ENCODE measurements at regions of chr3 and their contacts with region 1.

Region 1: GRCh38 chr3:130759699-130760338 is 13.2 kb upstream of the PIK3R4 start:
- DNase-seq: peak in 1 of 2 donors; percentile 60
- H3K4me3 ChIP-seq: no peak overlapping the region
- H3K27ac ChIP-seq: no peak overlapping the region
- H3K4me1 ChIP-seq: no peaks in the 10 kb centered on the region
- H3K27me3 ChIP-seq: no peaks in the 10 kb centered on the region
- CTCF ChIP-seq: peak; percentile 34 to 69 (median 65)
- POLR2A ChIP-seq: no peak

Region 2: GRCh38 chr3:130457671-130458070 is 302.1 kb before region 1 on chr3:
- intact Hi-C with region 1: loop called (anchors 10 kb)
- DNase-seq: no peak
- H3K4me3 ChIP-seq: no peak overlapping the region
- H3K27ac ChIP-seq: no peak overlapping the region
- H3K4me1 ChIP-seq: no peaks in the 10 kb centered on the region
- H3K27me3 ChIP-seq: no peaks in the 10 kb centered on the region
- CTCF ChIP-seq: no peak
- POLR2A ChIP-seq: no peak

Region 3: GRCh38 chr3:130892759-130893375 is 133.0 kb after region 1 on chr3:
- intact Hi-C with region 1: loop called (anchors 10 kb)
- DNase-seq: peak in 1 of 2 donors; percentile 72
- H3K4me3 ChIP-seq: peak overlapping the region; percentile 89 to 95 (median 92)
- H3K27ac ChIP-seq: peak overlapping the region; percentile 97
- H3K4me1 ChIP-seq: peaks cover 0 to 9% of the 10 kb centered on the region in 2 donors
- H3K27me3 ChIP-seq: no peaks in the 10 kb centered on the region
- CTCF ChIP-seq: peak; percentile 62 to 86 (median 84)
- POLR2A ChIP-seq: no peak

Region 4: GRCh38 chr3:131505421-131505820 is 745.6 kb after region 1 on chr3:
- intact Hi-C with region 1: loop called (anchors 5 kb)
- DNase-seq: no peak
- H3K4me3 ChIP-seq: no peak overlapping the region
- H3K27ac ChIP-seq: no peak overlapping the region
- H3K4me1 ChIP-seq: peaks cover 0 to 4% of the 10 kb centered on the region in 2 donors
- H3K27me3 ChIP-seq: no peaks in the 10 kb centered on the region
- CTCF ChIP-seq: no peak
- POLR2A ChIP-seq: no peak